Right ventricle myocardium inferior (tissue), 1 donor: ENCODE measurements at regions of chr14 and their contacts with region 1.

Region 1: DNA sequence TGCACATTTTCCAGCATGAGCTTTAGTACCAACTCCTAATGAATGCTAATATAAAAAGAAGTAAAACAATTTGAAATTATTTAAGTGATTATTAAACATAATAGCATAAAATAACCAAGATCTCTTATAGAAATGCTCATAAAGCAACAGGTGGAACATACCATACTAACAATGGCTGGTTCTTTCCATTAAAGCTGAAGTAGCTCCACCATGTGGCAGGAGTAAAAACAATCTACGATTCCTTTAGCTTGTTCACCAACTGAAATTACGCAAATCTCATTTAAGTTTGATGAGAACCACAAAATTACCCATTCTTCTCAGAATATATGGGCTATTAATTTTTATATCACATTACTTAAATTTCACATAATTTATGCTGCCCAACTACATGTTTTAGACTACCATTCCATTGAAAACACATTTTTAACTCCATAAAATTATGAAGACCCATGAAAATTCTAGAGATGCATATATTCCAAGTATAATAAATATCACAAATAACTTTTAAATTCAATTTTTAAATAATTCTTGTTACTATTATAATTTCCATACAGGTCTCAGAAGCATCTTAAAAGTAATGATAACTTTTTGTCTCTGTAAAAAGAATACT is 213.6 kb downstream of the DAD1 start:
- DNase-seq: no peak
- ATAC-seq: no peak

Region 2: GRCh38 chr14:22168092-22168955 is 207.1 kb before region 1 on chr14:
- intact Hi-C with region 1: no loop called
- DNase-seq: no peak
- ATAC-seq: no peak

Region 3: GRCh38 chr14:22319526-22320361 is 55.7 kb before region 1 on chr14:
- intact Hi-C with region 1: loop called (anchors 1 kb)
- DNase-seq: no peak
- ATAC-seq: peak; percentile 76

Region 4: DNA sequence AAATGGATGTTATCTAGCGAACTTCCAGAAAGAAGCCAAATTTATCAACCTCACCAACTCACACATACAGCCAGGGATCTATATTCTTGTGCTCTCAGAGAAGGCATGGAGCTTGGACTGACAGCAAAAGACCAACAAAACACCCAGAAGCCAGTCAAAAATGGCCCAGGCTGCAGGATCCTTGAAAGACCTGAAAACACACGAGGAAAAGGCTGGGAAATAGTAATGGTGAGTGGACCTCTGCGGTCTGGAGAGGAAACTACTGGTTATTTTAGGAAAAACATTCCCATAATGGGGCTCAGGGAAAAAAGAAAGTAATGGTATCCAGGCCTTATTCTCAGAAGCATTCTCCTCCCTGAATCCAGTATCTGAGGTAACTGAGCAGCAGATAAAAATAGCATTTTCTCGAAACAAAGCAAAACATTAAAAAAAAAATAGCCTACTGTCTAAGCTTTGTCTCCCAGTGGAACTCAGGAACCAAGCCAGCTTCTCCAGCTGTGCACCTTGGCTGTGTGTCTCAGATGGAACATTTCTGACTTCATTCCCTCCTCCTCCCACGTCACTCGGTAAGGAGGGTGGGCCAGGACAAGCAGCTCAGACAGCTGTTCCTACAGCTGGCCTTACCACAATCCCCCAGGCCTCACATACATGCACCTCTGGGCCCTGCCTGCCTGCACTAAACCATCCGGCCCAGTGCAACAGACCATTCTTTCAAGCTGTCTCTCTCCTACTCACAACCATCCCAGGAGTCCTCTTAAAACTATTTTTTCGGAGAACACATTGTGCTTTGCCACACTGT is 36.3 kb before region 1 on chr14:
- intact Hi-C with region 1: no loop called
- DNase-seq: peak; percentile 86
- ATAC-seq: peak; percentile 99

Region 5: DNA sequence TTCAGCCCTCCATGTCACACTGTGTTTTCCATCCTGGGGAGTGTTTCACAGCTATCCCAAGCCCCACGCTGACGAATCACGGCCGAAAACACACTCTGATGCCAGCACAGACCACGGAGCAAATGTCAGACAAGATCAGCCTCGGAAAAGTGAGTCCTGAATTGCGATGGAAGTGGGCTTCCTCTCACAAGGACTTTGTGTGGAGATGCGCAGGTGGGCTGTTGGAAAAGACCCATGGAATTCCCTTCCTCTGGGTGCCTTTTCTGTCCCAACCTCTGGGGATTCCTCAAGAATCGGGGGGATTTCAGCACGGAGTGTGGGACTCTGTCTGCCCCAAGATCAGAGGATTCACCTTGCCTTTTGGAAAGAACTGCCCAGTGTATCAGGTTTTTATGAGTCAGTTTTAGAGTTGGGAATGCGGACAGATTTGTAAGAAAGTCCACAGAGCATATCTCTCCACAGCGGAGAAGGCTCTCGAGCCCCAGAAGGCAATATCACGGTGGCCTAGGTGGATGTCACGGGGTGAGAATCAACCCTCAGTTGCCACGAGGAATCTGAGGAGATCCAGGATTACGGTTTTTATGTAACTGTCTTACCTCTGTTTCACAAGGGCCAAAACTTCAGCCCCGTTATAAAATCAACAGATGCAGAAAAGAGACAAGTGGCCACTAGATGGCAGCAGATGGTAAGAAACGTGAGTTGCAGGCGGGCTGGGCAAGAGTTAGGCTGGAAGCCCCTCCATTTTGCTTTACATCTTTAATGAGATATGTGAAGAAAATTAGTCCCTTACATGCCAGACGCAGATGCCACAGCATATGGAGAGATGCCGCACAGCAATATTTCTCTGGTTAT is 11.7 kb after region 1 on chr14:
- intact Hi-C with region 1: no loop called
- DNase-seq: peak; percentile 67
- ATAC-seq: peak; percentile 35